ENCODE measurements at regions of chr9 and their contacts with region 1.

Region 1: DNA sequence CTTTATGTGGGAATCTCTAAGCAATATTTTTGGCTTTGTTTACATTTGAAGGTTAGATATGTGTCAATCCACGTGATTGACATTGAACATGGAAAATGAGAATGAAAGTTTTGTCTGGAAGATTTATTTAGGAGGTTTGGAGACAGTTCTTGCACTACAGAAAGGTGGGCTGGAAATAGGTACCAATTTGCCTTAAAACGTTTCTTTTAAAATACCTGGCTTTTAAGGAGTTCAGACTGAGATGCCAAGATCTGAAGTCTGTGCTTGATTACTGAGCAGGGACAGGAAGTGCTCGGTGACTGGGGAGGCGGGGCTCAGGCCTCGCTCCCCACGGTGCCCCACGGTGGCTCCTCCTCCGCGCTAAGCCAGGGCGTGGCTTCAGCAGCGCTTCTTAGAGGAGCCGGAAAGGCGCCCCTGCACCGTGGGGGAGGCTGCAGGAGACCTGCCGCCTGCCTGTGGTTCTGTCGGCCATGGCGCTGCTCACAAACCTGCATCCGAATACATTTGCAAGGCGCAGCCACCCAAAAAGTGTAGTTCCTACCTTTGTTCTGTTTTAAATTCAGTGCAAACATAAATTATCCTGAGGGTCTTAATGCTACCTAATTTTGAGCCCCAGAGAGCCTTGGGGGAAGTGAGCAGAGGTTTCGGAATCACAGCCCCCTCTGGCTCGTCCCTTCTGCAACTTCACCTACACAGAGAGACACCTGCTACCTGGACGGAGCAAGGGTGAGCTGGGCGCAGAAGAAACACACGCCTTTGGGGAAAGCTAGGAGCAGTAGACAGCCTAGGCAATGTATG is 49.2 kb downstream of the USP20 start:
- DNase-seq: peak; percentile 97
- H3K4me3 ChIP-seq: no peak overlapping the region
- H3K27ac ChIP-seq: peak overlapping the region; percentile 77
- H3K4me1 ChIP-seq: peaks cover 71% of the 10 kb centered on the region
- H3K27me3 ChIP-seq: no peaks in the 10 kb centered on the region
- CTCF ChIP-seq: no peak

Region 2: GRCh38 chr9:129938291-129938979 is 54.0 kb after region 1 on chr9:
- CTCF ChIA-PET with region 1: no interaction called
- POLR2A ChIA-PET with region 1: no interaction called
- intact Hi-C with region 1: loop called (anchors 5 kb)
- DNase-seq: peak; percentile 63
- H3K4me3 ChIP-seq: no peak overlapping the region
- H3K27ac ChIP-seq: peak overlapping the region; percentile 77
- H3K4me1 ChIP-seq: peaks cover 70% of the 10 kb centered on the region
- H3K27me3 ChIP-seq: no peaks in the 10 kb centered on the region
- CTCF ChIP-seq: no peak

Region 3: GRCh38 chr9:129962889-129963703 is 78.7 kb after region 1 on chr9:
- CTCF ChIA-PET with region 1: no interaction called
- POLR2A ChIA-PET with region 1: no interaction called
- intact Hi-C with region 1: loop called (anchors 2 kb)
- DNase-seq: peak; percentile 86
- H3K4me3 ChIP-seq: peak overlapping the region; percentile 47
- H3K27ac ChIP-seq: peak overlapping the region; percentile 100
- H3K4me1 ChIP-seq: peaks cover 53% of the 10 kb centered on the region
- H3K27me3 ChIP-seq: no peaks in the 10 kb centered on the region
- CTCF ChIP-seq: no peak

Region 4: DNA sequence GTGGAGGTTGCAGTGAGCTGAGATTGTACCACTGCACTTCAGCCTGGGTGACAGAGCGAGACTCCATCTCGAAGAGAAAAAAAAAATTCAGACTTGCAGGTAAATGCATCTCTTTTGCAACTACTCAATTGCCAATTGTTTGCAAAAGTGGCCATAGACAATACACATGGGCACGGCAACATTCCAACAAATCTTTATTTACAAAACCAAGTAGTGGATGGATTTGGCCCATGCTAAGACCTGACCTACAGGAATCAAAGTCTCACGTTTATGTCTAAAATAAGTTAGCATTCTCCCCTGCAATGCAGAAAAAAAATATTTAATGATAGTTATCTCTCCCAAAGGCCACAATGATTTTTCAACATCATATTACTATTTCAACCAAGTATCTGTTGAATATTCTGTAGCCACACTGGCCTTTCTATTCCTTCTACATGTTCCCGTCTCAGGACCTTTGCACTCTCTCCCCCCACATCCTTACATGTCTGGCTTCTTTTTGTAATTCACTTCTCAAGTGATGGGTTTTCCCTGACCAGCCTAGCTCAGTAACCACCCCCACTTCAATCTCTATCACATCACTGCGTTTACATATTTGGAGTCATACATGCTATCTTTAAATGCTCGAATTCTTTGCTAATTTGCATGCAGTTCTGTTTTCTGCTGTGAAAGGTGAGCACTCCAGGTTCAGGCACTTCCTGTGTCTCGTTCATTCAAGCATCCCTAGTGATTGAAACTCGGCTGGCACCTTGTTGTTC is 104.4 kb after region 1 on chr9:
- CTCF ChIA-PET with region 1: no interaction called
- POLR2A ChIA-PET with region 1: no interaction called
- intact Hi-C with region 1: no loop called
- DNase-seq: no peak
- H3K4me3 ChIP-seq: no peak overlapping the region
- H3K27ac ChIP-seq: no peak overlapping the region
- H3K4me1 ChIP-seq: peaks cover 15% of the 10 kb centered on the region
- H3K27me3 ChIP-seq: no peaks in the 10 kb centered on the region
- CTCF ChIP-seq: no peak

Region 5: DNA sequence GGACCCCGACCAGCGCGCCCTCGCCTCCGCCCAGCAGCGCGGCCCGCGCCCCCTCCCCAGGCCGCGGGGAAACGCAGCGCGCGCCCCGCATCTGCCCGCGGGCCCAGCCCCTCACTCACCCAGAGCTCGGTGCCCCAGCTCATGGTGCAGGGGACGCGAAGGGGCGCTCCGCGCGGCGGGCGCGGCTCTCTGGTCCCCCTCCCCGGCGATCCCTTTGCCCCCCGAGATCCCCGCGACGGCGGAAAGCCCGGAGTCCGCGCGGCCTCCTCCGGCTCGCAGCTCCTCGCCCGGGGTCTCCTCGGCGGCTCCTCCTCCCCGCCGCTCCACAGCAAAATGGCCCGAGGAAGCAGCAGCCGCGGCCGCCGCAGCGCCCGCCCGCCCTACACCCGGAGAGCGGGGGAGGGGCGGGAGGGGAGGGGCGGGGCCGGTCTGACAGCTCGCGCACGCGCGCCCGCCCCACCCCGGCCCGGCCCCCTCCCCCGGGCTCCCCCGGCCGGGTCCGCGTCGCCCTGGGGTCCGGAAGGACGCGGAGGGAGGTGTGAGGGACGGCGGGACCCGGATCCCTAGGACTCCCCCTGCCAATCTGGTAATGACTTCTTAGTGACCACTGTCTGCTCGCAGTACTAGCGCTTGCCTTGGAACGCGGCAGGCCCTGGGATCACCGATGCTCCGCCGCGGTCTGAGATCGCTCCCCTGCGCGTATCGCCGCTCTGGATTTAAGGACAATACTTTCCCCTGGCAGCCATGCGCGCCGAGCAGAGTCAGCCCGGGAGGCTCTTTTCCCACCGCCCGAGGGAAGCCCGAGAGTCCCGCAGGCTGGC is 158.6 kb after region 1 on chr9 and contains the start of gene FNBP1:
- CTCF ChIA-PET with region 1: no interaction called
- POLR2A ChIA-PET with region 1: no interaction called
- intact Hi-C with region 1: loop called (anchors 5 kb)
- DNase-seq: peak; percentile 90
- H3K4me3 ChIP-seq: peak within 1 kb of the TSS; percentile 95
- H3K27ac ChIP-seq: peak within 1 kb of the TSS; percentile 97
- H3K4me1 ChIP-seq: peaks cover 56% of the 10 kb centered on the region
- H3K27me3 ChIP-seq: no peaks in the 10 kb centered on the region
- CTCF ChIP-seq: no peak
- total RNA-seq, gene FNBP1: 200 and 215 TPM in 2 replicates

Region 6: DNA sequence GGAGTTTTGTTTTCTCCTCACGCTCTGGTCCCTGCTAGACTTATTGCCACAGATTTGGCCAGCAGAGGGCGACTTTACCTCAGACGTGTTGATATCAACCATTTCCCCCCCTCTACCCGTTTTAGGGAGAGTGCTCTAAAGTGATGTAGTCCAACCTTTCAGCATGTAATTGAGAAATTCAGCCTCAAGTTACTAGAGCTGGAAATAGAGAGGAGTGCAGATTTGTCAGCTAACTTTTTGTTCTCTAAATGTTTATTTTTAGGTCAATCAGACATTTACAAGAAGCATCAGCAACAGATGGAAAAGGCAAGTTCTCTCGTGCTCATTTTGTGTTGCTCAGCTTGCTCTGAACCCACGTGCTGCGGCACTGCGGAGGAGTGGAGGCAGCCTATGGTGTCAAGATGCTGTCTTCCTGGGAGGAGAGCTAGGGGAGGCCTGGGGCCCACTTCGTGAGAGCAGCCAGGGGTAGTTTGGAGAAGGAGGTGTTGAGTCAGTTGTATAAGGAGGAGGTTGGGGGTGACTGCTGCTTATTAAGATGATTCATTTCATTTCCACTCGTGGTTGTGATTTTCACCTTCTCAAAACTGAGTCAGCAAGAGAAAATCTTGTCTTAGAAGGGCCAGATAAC is 222.9 kb after region 1 on chr9:
- CTCF ChIA-PET with region 1: no interaction called
- POLR2A ChIA-PET with region 1: no interaction called
- intact Hi-C with region 1: loop called (anchors 5 kb)
- DNase-seq: peak; percentile 87
- H3K4me3 ChIP-seq: no peak overlapping the region
- H3K27ac ChIP-seq: no peak overlapping the region
- H3K4me1 ChIP-seq: no peaks in the 10 kb centered on the region
- H3K27me3 ChIP-seq: no peaks in the 10 kb centered on the region
- CTCF ChIP-seq: peak; percentile 93